Panc1 (cell line): ENCODE measurements at regions of chr19 and their contacts with region 1.

Region 1: DNA sequence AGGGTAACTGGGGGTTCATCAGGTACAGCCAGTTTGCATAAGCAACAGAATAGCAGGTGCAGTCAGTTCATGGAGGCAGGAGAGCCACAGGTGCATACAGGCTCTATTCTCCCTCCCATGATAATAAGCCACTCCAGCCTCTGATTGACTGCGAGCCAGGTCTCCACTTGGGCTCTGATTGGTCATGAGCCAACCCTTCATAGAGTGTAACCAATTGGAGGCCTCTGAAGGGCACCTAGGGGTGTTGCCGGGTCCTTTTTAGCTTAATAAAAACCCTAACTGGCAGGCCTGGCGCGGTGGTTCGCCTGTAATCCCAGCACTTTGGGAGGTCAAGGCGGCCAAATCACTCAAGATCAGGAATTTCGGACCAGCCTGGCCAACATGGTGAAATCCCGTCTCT is 8.7 kb upstream of the CKM start:
- DNase-seq: no peak
- ATAC-seq: peak; percentile 46; the same call in 1 of the 2 replicates
- H3K4me3 ChIP-seq: no peak overlapping the region
- H3K27ac ChIP-seq: no peak overlapping the region
- H3K4me1 ChIP-seq: peaks cover 3% of the 10 kb centered on the region
- H3K27me3 ChIP-seq: no peaks in the 10 kb centered on the region
- CTCF ChIP-seq: no peak

Region 2: GRCh38 chr19:45200568-45200994 is 130.8 kb before region 1 on chr19:
- CTCF ChIA-PET with region 1: no interaction called
- POLR2A ChIA-PET with region 1: interaction called, 3 read pairs
- in situ Hi-C with region 1: no loop called
- intact Hi-C with region 1: loop called (anchors 10 kb)
- DNase-seq: no peak
- ATAC-seq: peak; percentile 66; the same call in 1 of the 2 replicates
- H3K4me3 ChIP-seq: no peak overlapping the region
- H3K27ac ChIP-seq: no peak overlapping the region
- H3K4me1 ChIP-seq: no peaks in the 10 kb centered on the region
- H3K27me3 ChIP-seq: no peaks in the 10 kb centered on the region
- CTCF ChIP-seq: no peak

Region 3: GRCh38 chr19:45234089-45234869 is 97.1 kb before region 1 on chr19:
- CTCF ChIA-PET with region 1: no interaction called
- POLR2A ChIA-PET with region 1: no interaction called
- in situ Hi-C with region 1: no loop called
- intact Hi-C with region 1: no loop called
- DNase-seq: no peak
- ATAC-seq: no peak
- H3K4me3 ChIP-seq: no peak overlapping the region
- H3K27ac ChIP-seq: no peak overlapping the region
- H3K4me1 ChIP-seq: no peaks in the 10 kb centered on the region; the same call in 1 of the 2 replicates
- H3K27me3 ChIP-seq: no peaks in the 10 kb centered on the region
- CTCF ChIP-seq: no peak

Region 4: GRCh38 chr19:45346449-45346848 is 15.0 kb after region 1 on chr19:
- CTCF ChIA-PET with region 1: no interaction called
- POLR2A ChIA-PET with region 1: no interaction called
- in situ Hi-C with region 1: no loop called
- intact Hi-C with region 1: no loop called
- DNase-seq: no peak
- ATAC-seq: no peak
- H3K4me3 ChIP-seq: no peak overlapping the region
- H3K27ac ChIP-seq: no peak overlapping the region
- H3K4me1 ChIP-seq: no peaks in the 10 kb centered on the region
- H3K27me3 ChIP-seq: no peaks in the 10 kb centered on the region
- CTCF ChIP-seq: no peak